ENCODE measurements at regions of chr11 and their contacts with region 1.

Region 1: DNA sequence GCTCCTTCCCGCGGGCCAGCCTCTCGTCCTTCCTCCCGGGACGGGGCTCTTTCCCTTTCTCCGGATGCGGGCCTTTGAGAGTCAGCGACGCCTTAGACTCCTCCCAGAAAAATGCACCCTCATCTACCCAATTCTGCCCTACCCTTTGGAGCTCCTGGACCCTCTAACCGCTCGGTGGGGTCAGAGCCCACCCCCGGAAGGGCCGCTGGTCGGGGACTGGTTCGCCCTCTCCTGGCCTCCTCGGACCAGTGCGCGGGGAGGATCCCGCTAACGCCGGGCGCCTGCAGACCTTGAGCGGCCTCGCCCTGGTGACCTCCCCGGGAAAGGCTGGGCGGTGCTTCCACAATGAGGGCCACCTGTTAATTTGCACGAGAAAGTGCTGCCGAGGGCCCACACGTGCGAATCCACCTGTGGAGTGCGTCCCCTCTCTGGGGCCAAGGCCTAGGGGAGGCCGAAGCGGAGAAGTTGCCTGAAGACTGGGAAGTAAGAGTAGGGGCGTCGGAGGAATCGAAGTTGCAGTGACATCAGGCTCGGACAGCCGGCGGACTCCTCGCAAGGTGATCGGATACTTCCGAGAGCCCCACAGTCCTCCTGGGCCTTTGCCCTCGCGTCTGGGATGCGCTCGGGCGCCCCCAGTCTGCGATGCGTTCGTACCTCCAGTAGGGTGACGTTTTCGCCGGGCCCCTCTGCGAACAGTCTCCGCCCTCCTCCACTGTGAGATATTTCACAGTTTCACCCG is 61.5 kb downstream of the ENDOD1 start:
- DNase-seq: peak; percentile 74 to 93 (median 90)
- ATAC-seq: peak; percentile 97
- H3K4me3 ChIP-seq: peak overlapping the region; percentile 91
- H3K4me3 Mint-ChIP-seq: peak overlapping the region; percentile 81 to 92 (median 88)
- H3K27ac ChIP-seq: peak overlapping the region; percentile 75
- H3K27ac Mint-ChIP-seq: peak overlapping the region; percentile 92 to 99 (median 96)
- H3K4me1 ChIP-seq: peaks cover 19 to 22% of the 10 kb centered on the region in 2 donors
- H3K4me1 Mint-ChIP-seq: peaks cover 22 to 53% (median 32%) of the 10 kb centered on the region in 7 donors
- H3K27me3 ChIP-seq: no peaks in the 10 kb centered on the region
- H3K27me3 Mint-ChIP-seq: peaks cover 0 to 5% (median 3%) of the 10 kb centered on the region in 5 donors

Region 2: GRCh38 chr11:94493281-94494125 is 657.6 kb before region 1 on chr11 and contains the starts of genes ANKRD49 and MRE11:
- CTCF ChIA-PET with region 1: no interaction called
- POLR2A ChIA-PET with region 1: no interaction called
- intact Hi-C with region 1: loop called (anchors 5 kb)
- DNase-seq: peak; percentile 92 to 98 (median 97)
- ATAC-seq: peak; percentile 100
- H3K4me3 ChIP-seq: peak within 1 kb of the TSS; percentile 94
- H3K4me3 Mint-ChIP-seq: peak within 1 kb of the TSS; percentile 92 to 99 (median 96)
- H3K27ac ChIP-seq: peak within 1 kb of the TSS; percentile 93
- H3K27ac Mint-ChIP-seq: peak within 1 kb of the TSS; percentile 91 to 99 (median 97)
- H3K4me1 ChIP-seq: peaks cover 18 to 28% of the 10 kb centered on the region in 2 donors
- H3K4me1 Mint-ChIP-seq: peaks cover 31 to 64% (median 42%) of the 10 kb centered on the region in 7 donors
- H3K27me3 ChIP-seq: no peaks in the 10 kb centered on the region
- H3K27me3 Mint-ChIP-seq: no peaks in the 10 kb centered on the region
- total RNA-seq, gene ANKRD49: 25.6 to 64.4 (median 44.5) TPM
- total RNA-seq, gene MRE11: 19.0 to 45.5 (median 40.1) TPM

Region 3: DNA sequence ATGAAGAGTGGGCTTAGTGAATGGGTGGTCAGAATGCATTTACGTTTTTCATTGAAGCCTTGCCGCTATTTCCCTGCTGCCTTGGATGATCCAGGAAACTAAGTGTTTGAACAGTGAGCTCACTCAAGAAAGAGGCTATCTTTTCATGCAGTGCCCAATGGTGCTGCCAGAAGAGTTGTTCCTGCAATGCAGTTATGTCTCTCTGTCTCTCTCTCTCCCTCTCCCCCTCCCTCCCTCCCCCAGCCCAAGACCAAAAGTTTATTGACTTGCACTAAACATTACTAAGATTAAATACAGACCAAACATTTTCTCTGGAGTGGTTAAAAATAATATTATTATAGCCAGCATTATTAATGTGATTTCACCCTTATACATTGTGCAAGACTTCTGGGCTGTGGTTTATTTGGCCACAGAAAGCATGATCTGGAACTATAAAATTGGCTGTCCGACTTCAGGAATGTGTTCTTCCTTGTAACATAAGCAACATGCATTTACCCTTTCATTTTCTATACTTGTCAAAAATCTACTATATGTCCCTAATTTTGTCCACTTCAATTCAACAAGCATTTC is 614.0 kb before region 1 on chr11:
- CTCF ChIA-PET with region 1: no interaction called
- POLR2A ChIA-PET with region 1: no interaction called
- intact Hi-C with region 1: no loop called
- DNase-seq: no peak
- ATAC-seq: no peak
- H3K4me3 ChIP-seq: no peak overlapping the region
- H3K4me3 Mint-ChIP-seq: no peak overlapping the region
- H3K27ac ChIP-seq: no peak overlapping the region
- H3K27ac Mint-ChIP-seq: no peak overlapping the region
- H3K4me1 ChIP-seq: no peaks in the 10 kb centered on the region
- H3K4me1 Mint-ChIP-seq: no peaks in the 10 kb centered on the region
- H3K27me3 ChIP-seq: no peaks in the 10 kb centered on the region
- H3K27me3 Mint-ChIP-seq: peaks cover 11 to 39% (median 22%) of the 10 kb centered on the region in 5 donors

Region 4: DNA sequence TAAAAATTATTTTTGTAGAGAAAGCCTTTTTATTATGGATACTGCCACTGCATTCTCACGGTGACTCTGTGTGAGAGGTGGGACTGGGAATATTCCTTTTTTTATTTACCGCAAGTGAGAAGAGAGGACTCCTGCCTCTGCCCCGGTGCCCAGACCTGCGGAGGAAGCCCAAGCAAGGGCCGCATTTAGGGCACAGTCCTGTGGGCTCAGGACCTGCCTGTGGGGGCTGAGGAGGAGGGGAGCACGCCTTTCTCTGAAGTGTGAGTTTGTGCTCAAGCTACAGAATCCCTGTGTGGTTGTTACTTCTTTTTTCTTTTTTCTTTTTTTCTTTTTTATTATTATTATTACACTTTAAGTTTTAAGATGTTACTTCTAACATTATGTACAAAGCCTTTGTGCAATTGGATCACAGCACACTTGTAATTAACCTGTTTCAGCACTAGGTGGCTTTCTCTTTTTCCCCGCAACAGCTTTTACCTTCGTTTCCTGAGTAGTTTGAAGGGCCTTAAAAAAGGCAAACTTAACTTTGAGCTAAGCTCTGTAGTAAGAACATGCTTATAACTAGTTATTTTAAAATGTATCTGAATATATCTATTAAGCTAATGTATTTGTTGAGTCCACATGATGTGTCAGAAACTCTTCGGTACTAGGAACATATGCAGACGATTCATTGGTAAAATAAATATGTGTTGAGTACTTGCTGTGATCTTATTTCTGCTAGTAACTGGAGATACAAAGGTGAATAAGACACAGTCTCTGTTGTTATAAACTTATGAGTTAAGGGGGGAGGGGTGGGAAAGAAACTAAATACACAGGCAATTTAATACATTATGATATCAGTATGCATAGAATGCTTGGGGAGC is 364.6 kb before region 1 on chr11:
- CTCF ChIA-PET with region 1: no interaction called
- POLR2A ChIA-PET with region 1: no interaction called
- intact Hi-C with region 1: loop called in 1 of 2 experiments (anchors 5 kb)
- DNase-seq: peak in 5 of 9 donors; percentile 18 to 52 (median 42)
- ATAC-seq: peak; percentile 63
- H3K4me3 ChIP-seq: no peak overlapping the region
- H3K4me3 Mint-ChIP-seq: no peak overlapping the region
- H3K27ac ChIP-seq: no peak overlapping the region
- H3K27ac Mint-ChIP-seq: no peak overlapping the region
- H3K4me1 ChIP-seq: no peaks in the 10 kb centered on the region
- H3K4me1 Mint-ChIP-seq: peaks cover 0 to 3% (median 0%) of the 10 kb centered on the region in 7 donors
- H3K27me3 ChIP-seq: no peaks in the 10 kb centered on the region
- H3K27me3 Mint-ChIP-seq: peaks cover 5 to 23% (median 9%) of the 10 kb centered on the region in 5 donors

Region 5: GRCh38 chr11:95128602-95129001 is 22.5 kb before region 1 on chr11:
- CTCF ChIA-PET with region 1: no interaction called
- POLR2A ChIA-PET with region 1: no interaction called
- intact Hi-C with region 1: no loop called
- DNase-seq: no peak
- ATAC-seq: no peak
- H3K4me3 ChIP-seq: no peak overlapping the region
- H3K4me3 Mint-ChIP-seq: no peak overlapping the region
- H3K27ac ChIP-seq: no peak overlapping the region
- H3K27ac Mint-ChIP-seq: peak overlapping the region in 1 of 9 donors; percentile 36
- H3K4me1 ChIP-seq: no peaks in the 10 kb centered on the region
- H3K4me1 Mint-ChIP-seq: peaks cover 0 to 9% (median 0%) of the 10 kb centered on the region in 7 donors
- H3K27me3 ChIP-seq: no peaks in the 10 kb centered on the region
- H3K27me3 Mint-ChIP-seq: no peaks in the 10 kb centered on the region

Region 6: DNA sequence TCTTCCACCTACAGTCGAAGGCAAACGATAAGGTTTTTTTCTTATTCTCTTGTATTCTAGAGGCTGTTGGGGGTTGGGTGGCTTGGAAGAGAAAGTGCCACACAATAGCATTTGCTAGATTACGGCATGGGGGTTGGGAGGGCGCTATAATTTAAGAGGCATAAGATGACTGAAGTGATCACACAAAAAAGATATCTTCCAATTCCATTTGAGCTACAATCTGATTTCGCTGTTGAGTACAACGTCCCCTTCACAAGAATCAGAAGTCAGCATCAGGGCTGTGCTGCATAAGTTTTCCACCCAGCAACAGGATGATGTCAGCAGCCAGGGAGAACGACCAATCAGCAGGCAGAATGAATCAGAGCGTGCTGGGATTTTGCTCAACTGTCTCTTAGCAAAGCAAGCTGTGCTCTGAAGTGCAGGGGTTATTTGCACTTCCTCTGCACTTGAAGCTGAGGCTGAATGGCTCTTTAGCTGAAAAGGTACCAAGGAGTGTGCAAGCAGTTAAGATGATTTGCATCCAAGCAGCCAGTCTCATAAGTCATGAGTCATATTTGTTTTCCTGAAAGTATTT is 103.1 kb after region 1 on chr11:
- CTCF ChIA-PET with region 1: interaction called, 5 read pairs
- POLR2A ChIA-PET with region 1: no interaction called
- intact Hi-C with region 1: loop called in 1 of 2 experiments (anchors 1 kb)
- DNase-seq: peak; percentile 45 to 91 (median 84)
- ATAC-seq: peak; percentile 98
- H3K4me3 ChIP-seq: peak overlapping the region; percentile 52
- H3K4me3 Mint-ChIP-seq: peak overlapping the region; percentile 74 to 98 (median 89)
- H3K27ac ChIP-seq: peak overlapping the region; percentile 71
- H3K27ac Mint-ChIP-seq: peak overlapping the region; percentile 81 to 98 (median 90)
- H3K4me1 ChIP-seq: peaks cover 13 to 31% of the 10 kb centered on the region in 2 donors
- H3K4me1 Mint-ChIP-seq: peaks cover 20 to 59% (median 53%) of the 10 kb centered on the region in 7 donors
- H3K27me3 ChIP-seq: no peaks in the 10 kb centered on the region
- H3K27me3 Mint-ChIP-seq: no peaks in the 10 kb centered on the region

Region 7: DNA sequence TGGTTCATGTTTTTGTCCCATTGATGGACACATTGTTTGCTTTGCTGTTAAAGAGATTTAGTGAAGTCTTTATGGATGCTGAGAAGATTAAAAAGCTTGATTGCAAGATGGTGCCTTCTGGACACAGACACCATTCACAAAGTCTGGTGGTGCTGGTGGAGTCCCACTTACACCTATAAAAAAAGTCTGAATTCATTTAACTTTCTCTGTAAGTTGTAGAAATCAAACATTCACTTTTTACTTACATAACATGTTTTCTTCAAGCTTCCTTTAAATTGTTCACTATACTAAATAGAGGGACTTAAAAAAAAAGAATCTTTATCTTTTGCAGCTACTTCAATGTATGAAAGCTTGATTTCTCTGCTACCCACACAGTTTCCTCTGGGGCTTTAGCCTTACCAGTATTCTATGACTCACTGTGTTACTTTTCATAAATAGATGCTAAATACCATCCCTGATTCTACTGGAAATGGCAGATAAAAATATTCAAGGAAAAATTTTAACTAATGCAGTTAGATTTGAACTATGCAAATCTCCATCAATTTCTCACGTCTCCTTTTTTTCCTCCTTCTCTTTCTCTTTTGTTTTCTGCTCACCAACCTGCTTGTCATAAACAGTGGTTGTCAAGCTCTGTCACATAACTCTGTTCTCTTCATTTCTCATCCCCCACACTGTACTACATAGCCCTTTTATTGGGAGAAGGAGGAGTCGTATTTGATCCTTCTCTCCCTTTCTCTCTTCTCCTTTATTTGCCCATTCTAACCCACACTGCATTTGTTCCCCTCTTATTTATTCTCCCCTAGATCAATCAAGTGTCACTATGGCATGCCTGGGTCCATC is 548.7 kb after region 1 on chr11:
- CTCF ChIA-PET with region 1: interaction called, 192 read pairs
- POLR2A ChIA-PET with region 1: interaction called, 127 read pairs
- intact Hi-C with region 1: loop called (anchors 1 kb)
- DNase-seq: peak in 7 of 9 donors; percentile 41 to 67 (median 49)
- ATAC-seq: peak; percentile 78
- H3K4me3 ChIP-seq: peak overlapping the region; percentile 36
- H3K4me3 Mint-ChIP-seq: peak overlapping the region; percentile 68 to 87 (median 76)
- H3K27ac ChIP-seq: peak overlapping the region; percentile 85
- H3K27ac Mint-ChIP-seq: peak overlapping the region in 8 of 9 donors; percentile 95 to 99 (median 96)
- H3K4me1 ChIP-seq: peaks cover 42 to 72% of the 10 kb centered on the region in 2 donors
- H3K4me1 Mint-ChIP-seq: peaks cover 32 to 65% (median 61%) of the 10 kb centered on the region in 7 donors
- H3K27me3 ChIP-seq: no peaks in the 10 kb centered on the region
- H3K27me3 Mint-ChIP-seq: no peaks in the 10 kb centered on the region

Region 8: GRCh38 chr11:95790123-95790932 is 639.2 kb after region 1 on chr11 and contains the start of gene CEP57:
- CTCF ChIA-PET with region 1: interaction called, 12 read pairs
- POLR2A ChIA-PET with region 1: interaction called, 52 read pairs
- intact Hi-C with region 1: loop called (anchors 1 kb)
- DNase-seq: peak; percentile 80 to 98 (median 96)
- ATAC-seq: peak; percentile 70
- H3K4me3 ChIP-seq: peak within 1 kb of the TSS; percentile 97
- H3K4me3 Mint-ChIP-seq: peak within 1 kb of the TSS; percentile 93 to 100 (median 100)
- H3K27ac ChIP-seq: peak within 1 kb of the TSS; percentile 99
- H3K27ac Mint-ChIP-seq: peak within 1 kb of the TSS; percentile 100
- H3K4me1 ChIP-seq: peaks cover 21 to 22% of the 10 kb centered on the region in 2 donors
- H3K4me1 Mint-ChIP-seq: peaks cover 47 to 74% (median 61%) of the 10 kb centered on the region in 7 donors
- H3K27me3 ChIP-seq: no peaks in the 10 kb centered on the region
- H3K27me3 Mint-ChIP-seq: no peaks in the 10 kb centered on the region
- total RNA-seq, gene CEP57: 47.8 to 72.3 (median 68.9) TPM

Region 9: GRCh38 chr11:96254087-96254486 is 1103.0 kb after region 1 on chr11:
- CTCF ChIA-PET with region 1: no interaction called
- POLR2A ChIA-PET with region 1: no interaction called
- intact Hi-C with region 1: loop called in 1 of 2 experiments (anchors 5 kb)
- DNase-seq: peak in 7 of 9 donors; percentile 32 to 64 (median 43)
- ATAC-seq: peak; percentile 32
- H3K4me3 ChIP-seq: peak overlapping the region; percentile 40
- H3K4me3 Mint-ChIP-seq: peak overlapping the region; percentile 74 to 87 (median 81)
- H3K27ac ChIP-seq: peak overlapping the region; percentile 77
- H3K27ac Mint-ChIP-seq: peak overlapping the region; percentile 87 to 100 (median 96)
- H3K4me1 ChIP-seq: peaks cover 58 to 78% of the 10 kb centered on the region in 2 donors
- H3K4me1 Mint-ChIP-seq: peaks cover 62 to 99% (median 94%) of the 10 kb centered on the region in 7 donors
- H3K27me3 ChIP-seq: no peaks in the 10 kb centered on the region
- H3K27me3 Mint-ChIP-seq: no peaks in the 10 kb centered on the region